Prostate gland (tissue), 2 donors: ENCODE measurements at regions of chr9 and their contacts with region 1.

Region 1: GRCh38 chr9:123349691-123350480 is 6.1 kb upstream of the CRB2 start:
- DNase-seq: peak; percentile 54
- H3K4me3 ChIP-seq: no peak overlapping the region
- H3K27ac ChIP-seq: no peak overlapping the region
- H3K4me1 ChIP-seq: no peaks in the 10 kb centered on the region
- H3K27me3 ChIP-seq: no peaks in the 10 kb centered on the region
- CTCF ChIP-seq: peak; percentile 82 to 94 (median 90)
- POLR2A ChIP-seq: no peak

Region 2: DNA sequence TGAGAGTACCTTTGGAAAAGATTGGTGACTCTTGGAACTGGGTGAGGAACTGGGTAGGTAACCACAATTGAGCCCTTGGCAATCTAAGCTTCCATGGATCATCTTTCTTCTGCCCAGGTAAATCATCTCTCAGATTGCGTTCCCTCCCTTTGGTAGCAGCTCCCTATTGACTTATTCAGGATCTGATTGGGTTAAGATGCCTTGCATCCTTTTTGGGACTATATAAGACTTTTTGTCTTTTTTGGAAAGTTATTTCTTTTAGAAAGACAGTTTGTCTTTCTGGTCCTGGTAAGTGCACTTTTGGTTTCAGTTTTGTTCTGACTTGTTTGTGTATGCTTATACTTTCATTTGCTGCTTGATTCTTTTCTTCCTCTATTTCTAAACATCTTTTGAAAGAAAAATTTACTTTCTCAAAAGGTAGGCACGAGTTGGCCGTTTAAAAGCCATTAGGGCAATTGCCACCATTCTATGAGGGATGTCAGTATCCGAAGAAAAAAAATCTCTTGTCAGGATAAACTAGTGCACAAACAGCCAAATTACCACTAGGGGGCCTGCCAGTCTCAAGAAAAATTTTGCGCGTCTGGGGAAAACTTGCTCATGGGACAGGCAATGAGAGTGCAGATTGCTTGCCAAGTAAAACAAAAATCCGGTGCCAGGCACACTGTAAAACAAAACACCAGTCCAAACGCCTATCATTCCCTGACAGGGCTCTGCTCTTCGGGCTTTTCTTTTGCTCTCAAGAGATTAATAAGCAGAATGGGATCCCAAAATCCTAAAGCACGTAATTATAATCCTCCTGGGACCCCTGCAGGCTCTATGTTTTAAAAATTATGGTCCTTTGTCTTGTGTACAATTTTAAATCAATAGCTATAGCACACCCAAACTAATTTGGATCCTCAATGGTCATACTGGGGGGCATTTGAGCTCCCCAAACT is 885.0 kb before region 1 on chr9:
- intact Hi-C with region 1: loop called (anchors 10 kb)
- DNase-seq: peak; percentile 92
- H3K4me3 ChIP-seq: peak overlapping the region; percentile 17 to 18
- H3K27ac ChIP-seq: peak overlapping the region in 1 of 2 donors; percentile 21
- H3K4me1 ChIP-seq: no peaks in the 10 kb centered on the region
- H3K27me3 ChIP-seq: no peaks in the 10 kb centered on the region
- CTCF ChIP-seq: peak; percentile 48 to 96 (median 90)
- POLR2A ChIP-seq: no peak

Region 3: DNA sequence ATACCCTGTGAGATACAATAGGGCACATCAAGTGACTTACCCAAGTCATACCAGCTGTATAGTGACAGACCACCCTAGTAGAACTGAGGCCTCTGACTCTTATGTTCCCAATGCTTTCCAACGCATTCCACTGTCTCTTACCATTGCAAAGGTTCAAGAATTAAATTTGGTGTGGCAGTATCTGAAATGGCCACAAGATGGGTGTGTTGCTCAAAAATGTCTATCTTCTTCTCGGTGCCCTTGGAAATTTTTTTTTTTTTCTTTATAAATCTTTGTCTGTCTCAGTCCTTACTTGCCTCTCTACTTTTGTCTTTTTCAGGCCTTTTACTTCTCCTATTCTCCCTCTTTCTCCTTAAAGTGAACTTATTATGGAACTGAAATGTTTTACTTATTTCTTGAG is 268.1 kb before region 1 on chr9:
- intact Hi-C with region 1: loop called (anchors 5 kb)
- DNase-seq: no peak
- H3K4me3 ChIP-seq: no peak overlapping the region
- H3K27ac ChIP-seq: no peak overlapping the region
- H3K4me1 ChIP-seq: no peaks in the 10 kb centered on the region
- H3K27me3 ChIP-seq: no peaks in the 10 kb centered on the region
- CTCF ChIP-seq: peak in 3 of 4 experiments; percentile 44 to 58 (median 53)
- POLR2A ChIP-seq: no peak

Region 4: GRCh38 chr9:123107639-123108285 is 242.1 kb before region 1 on chr9:
- intact Hi-C with region 1: loop called (anchors 5 kb)
- DNase-seq: no peak
- H3K4me3 ChIP-seq: no peak overlapping the region
- H3K27ac ChIP-seq: no peak overlapping the region
- H3K4me1 ChIP-seq: no peaks in the 10 kb centered on the region
- H3K27me3 ChIP-seq: no peaks in the 10 kb centered on the region
- CTCF ChIP-seq: no peak
- POLR2A ChIP-seq: no peak

Region 5: DNA sequence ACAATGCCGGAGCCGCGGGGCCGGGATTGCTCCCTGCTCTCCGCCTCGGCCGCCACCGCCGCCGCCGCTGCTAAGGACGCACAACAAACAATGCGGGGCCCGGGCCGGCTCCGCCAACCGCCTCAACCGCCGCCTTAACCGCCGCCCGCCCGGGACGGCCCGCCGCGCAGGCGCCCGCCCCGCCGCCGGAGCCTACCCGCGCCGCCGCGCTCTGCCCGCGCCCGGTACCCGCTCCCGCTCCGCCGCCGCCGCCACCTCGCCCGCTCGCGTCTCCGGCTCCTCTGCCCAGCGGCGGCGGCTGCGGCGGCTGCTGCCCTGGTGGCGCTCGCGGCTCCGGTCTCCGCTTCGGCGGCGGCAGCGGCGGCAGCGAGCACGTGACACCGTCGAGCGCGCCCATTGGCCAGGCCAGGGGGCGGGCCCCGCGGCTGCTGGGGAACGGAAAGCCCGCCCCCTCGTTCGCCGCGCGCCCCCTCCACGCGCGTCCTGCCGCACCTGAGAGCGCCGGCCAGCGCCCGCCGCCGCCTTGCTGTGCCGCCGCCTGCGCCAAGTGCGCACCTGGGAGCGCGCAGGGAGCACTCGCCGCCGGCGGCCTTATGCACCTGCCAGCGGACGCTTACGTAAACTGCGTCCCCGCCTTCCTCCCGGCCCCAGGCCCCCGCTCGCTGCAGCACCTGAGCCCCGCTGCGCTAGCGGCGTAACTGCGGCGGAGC is 81.5 kb before region 1 on chr9 and contains the start of gene STRBP:
- intact Hi-C with region 1: loop called (anchors 5 kb)
- DNase-seq: peak; percentile 90
- H3K4me3 ChIP-seq: peak within 1 kb of the TSS; percentile 79 to 83
- H3K27ac ChIP-seq: peak within 1 kb of the TSS; percentile 73 to 76
- H3K4me1 ChIP-seq: no peaks in the 10 kb centered on the region
- H3K27me3 ChIP-seq: no peaks in the 10 kb centered on the region
- CTCF ChIP-seq: peak in 2 of 4 experiments; percentile 37 to 46
- POLR2A ChIP-seq: peak; percentile 47
- total RNA-seq, gene STRBP: 20.1 to 24.5 TPM

Region 6: DNA sequence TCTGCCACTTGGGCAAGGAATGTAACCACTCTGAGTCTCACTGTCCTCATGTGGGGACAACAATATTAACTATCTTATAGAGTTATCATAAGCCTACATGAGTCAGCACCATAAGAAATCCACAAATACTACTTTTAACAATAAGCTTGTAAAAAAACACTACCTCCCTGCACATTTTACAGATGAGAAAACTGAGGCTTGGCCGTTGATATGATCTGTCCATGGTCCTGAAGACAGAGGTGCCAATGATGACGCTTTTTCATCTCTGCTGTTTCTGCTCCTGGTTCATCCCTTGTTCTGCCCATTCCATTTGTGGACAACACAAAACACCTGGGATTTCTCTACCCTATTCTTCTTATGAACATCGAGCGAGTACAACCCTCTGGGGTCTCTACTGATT is 58.1 kb before region 1 on chr9:
- intact Hi-C with region 1: no loop called
- DNase-seq: no peak
- H3K4me3 ChIP-seq: no peak overlapping the region
- H3K27ac ChIP-seq: no peak overlapping the region
- H3K4me1 ChIP-seq: no peaks in the 10 kb centered on the region
- H3K27me3 ChIP-seq: no peaks in the 10 kb centered on the region
- CTCF ChIP-seq: no peak
- POLR2A ChIP-seq: no peak

Region 7: DNA sequence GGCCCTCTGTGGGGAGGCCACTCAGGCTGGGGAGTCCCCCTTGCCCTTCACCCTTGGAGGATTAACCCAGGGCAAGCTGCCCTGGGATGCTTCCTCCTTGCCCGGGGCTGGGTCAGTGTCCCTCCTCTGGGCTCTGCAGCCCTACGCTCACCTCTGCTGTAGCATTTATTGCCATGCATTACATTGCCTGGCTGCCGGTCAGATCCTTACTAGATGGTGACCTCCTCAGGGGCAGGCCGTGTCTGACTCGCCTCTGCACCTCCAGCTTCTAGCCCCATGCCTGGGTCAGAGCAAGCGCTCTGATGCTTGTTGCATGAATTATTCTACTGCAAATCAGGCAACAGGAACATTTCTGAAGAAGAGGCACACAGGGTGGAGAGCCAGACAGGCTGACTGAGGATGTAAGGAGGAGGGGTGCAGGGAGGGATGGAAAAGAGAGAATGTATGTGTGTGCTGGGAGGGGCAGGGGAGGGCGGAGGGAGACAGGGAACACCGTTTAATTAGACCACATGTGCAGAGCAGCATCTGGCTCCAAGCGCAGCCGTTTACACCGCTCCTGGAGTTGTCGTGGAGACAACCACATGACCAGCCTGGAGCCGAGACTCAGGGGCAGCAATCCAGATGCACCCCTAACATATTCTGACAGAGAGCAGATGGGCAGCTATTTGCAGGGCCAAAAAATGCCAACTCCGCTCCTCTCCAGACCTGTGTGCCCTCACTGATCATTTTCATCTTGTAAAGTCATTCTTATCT is 123.2 kb after region 1 on chr9:
- intact Hi-C with region 1: no loop called
- DNase-seq: no peak
- H3K4me3 ChIP-seq: no peak overlapping the region
- H3K27ac ChIP-seq: no peak overlapping the region
- H3K4me1 ChIP-seq: no peaks in the 10 kb centered on the region
- H3K27me3 ChIP-seq: no peaks in the 10 kb centered on the region
- CTCF ChIP-seq: no peak
- POLR2A ChIP-seq: no peak